OCI-LY7 (cell line): ENCODE measurements at regions of chr19 and their contacts with region 1.

Region 1: DNA sequence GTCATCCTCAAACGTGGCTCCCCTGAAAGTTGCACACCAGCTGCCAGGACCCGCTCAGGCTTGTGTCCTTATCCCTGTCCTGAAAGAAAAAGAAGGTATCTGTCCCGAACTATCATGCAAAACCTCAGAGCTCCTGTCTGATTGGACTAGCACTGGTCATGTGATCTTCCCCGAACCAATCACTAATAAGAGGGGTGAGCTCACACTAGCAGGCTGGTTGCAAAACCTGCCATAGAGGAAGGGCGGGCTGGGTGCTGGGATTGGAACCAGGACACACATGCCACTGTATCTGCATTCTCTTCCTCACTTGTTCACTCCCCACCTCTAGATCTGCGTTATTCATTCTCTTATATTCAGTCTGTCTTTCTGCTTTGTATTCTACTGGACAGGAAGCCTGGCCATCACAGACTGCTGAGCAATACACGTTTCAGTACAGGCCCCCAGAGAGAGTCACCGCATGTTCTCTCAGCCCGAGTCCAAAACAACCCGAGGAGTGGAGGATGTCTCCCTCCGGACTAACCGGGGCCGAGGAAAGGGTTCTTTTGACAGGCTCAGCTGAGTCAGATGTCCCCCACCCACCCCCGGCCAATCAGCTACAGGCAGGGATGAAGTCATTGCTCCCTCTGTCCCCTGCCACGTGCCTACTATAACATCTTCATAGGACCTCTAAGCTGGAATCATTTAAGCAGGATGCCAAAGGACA is 97.7 kb downstream of the SIPA1L3 start:
- DNase-seq: peak; percentile 93
- H3K4me3 ChIP-seq: peak overlapping the region; percentile 67
- H3K27ac ChIP-seq: peak overlapping the region; percentile 72
- H3K4me1 ChIP-seq: peaks cover 56% of the 10 kb centered on the region
- CTCF ChIP-seq: no peak

Region 2: GRCh38 chr19:37987356-37988332 is 17.0 kb before region 1 on chr19:
- CTCF ChIA-PET with region 1: interaction called, 4 read pairs
- POLR2A ChIA-PET with region 1: interaction called, 25 read pairs
- intact Hi-C with region 1: no loop called
- DNase-seq: peak; percentile 64
- H3K4me3 ChIP-seq: no peak overlapping the region
- H3K27ac ChIP-seq: peak overlapping the region; percentile 88
- H3K4me1 ChIP-seq: peaks cover 53% of the 10 kb centered on the region
- CTCF ChIP-seq: peak; percentile 92

Region 3: DNA sequence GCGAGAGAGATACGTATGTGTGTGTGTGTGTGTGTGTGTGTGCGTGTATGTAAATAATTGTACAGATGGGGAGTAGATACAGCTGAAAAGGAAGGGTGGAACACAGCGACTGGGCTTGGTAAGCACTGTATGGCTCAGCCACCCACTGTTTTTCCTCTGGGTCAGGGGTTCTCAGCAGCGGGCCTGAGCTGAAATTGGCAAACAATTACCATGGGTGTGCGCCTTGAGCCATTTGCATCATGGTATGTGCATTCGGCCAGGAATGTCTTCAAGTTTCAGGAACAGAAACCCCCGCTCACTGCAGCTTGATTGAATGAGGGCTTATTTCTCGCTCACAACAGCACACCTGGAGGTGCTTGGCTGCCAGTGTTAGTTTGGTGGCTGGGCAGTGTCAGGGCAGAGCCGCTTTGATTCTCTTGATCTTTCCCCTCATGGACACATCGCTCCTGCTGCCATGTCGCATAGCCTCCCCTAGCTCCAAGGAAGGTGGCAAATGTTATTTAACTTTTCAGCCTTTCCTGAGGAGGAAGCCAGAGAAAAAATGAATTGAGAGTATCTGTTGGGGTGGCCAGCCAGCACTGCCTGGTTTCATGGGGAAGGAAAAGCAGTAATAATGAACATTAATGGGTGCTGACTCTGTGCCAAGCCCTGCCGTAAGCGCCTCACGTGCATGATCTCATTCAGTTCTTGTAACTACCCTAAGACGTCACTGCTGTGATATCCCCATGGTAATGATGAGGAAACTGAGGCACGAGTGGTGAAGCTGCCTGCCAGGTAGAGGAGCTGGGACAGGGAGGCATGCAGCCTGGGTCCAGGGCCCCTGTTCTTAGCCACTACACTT is 29.2 kb after region 1 on chr19:
- CTCF ChIA-PET with region 1: interaction called, 10 read pairs
- POLR2A ChIA-PET with region 1: interaction called, 20 read pairs
- intact Hi-C with region 1: no loop called
- DNase-seq: peak; percentile 95
- H3K4me3 ChIP-seq: peak overlapping the region; percentile 56
- H3K27ac ChIP-seq: peak overlapping the region; percentile 97
- H3K4me1 ChIP-seq: peaks cover 76% of the 10 kb centered on the region
- CTCF ChIP-seq: peak; percentile 61